ENCODE measurements at regions of chr17 and their contacts with region 1.

Region 1: GRCh38 chr17:45584092-45585036 is 93.8 kb upstream of the PLEKHM1 start:
- DNase-seq: peak; percentile 50 to 75 (median 57)
- H3K4me3 ChIP-seq: peak overlapping the region; percentile 61
- H3K27ac ChIP-seq: peak overlapping the region; percentile 19 to 66
- H3K4me1 ChIP-seq: peaks cover 2% of the 10 kb centered on the region
- H3K27me3 ChIP-seq: no peaks in the 10 kb centered on the region
- CTCF ChIP-seq: no peak
- EP300 ChIP-seq: no peak
- POLR2A ChIP-seq: no peak

Region 2: GRCh38 chr17:45410144-45411091 is 173.9 kb before region 1 on chr17:
- intact Hi-C with region 1: no loop called
- DNase-seq: no peak
- H3K4me3 ChIP-seq: peak overlapping the region; percentile 3
- H3K27ac ChIP-seq: no peak overlapping the region
- H3K4me1 ChIP-seq: peaks cover 4% of the 10 kb centered on the region
- H3K27me3 ChIP-seq: no peaks in the 10 kb centered on the region
- CTCF ChIP-seq: no peak
- EP300 ChIP-seq: no peak
- POLR2A ChIP-seq: no peak

Region 3: GRCh38 chr17:46264456-46265198 is 680.3 kb after region 1 on chr17:
- intact Hi-C with region 1: loop called in 1 of 4 experiments (anchors 5 kb)
- DNase-seq: no peak
- H3K4me3 ChIP-seq: no peak overlapping the region
- H3K27ac ChIP-seq: no peak overlapping the region
- H3K4me1 ChIP-seq: peaks cover 1% of the 10 kb centered on the region
- H3K27me3 ChIP-seq: no peaks in the 10 kb centered on the region
- CTCF ChIP-seq: no peak
- EP300 ChIP-seq: no peak
- POLR2A ChIP-seq: no peak

Measured in ovary (tissue), 10 donors.